MCF 10A (cell line): ENCODE measurements at regions of chr13 and their contacts with region 1.

Region 1: GRCh38 chr13:27826379-27827353 is 34.4 kb downstream of the GSX1 start:
- DNase-seq: peak; percentile 87
- H3K4me3 Mint-ChIP-seq: peak overlapping the region; percentile 66
- H3K27ac Mint-ChIP-seq: peak overlapping the region; percentile 66
- H3K4me1 Mint-ChIP-seq: peaks cover 21% of the 10 kb centered on the region
- H3K27me3 Mint-ChIP-seq: peaks cover 29% of the 10 kb centered on the region
- CTCF ChIP-seq: peak; percentile 95

Region 2: GRCh38 chr13:27362064-27362883 is 464.4 kb before region 1 on chr13:
- CTCF ChIA-PET with region 1: interaction called, 100 read pairs
- POLR2A ChIA-PET with region 1: interaction called, 5 read pairs
- intact Hi-C with region 1: loop called (anchors 1 kb)
- DNase-seq: peak; percentile 79
- H3K4me3 Mint-ChIP-seq: peak overlapping the region; percentile 49
- H3K27ac Mint-ChIP-seq: peak overlapping the region; percentile 49
- H3K4me1 Mint-ChIP-seq: no peaks in the 10 kb centered on the region
- H3K27me3 Mint-ChIP-seq: peaks cover 6% of the 10 kb centered on the region
- CTCF ChIP-seq: peak; percentile 92

Region 3: DNA sequence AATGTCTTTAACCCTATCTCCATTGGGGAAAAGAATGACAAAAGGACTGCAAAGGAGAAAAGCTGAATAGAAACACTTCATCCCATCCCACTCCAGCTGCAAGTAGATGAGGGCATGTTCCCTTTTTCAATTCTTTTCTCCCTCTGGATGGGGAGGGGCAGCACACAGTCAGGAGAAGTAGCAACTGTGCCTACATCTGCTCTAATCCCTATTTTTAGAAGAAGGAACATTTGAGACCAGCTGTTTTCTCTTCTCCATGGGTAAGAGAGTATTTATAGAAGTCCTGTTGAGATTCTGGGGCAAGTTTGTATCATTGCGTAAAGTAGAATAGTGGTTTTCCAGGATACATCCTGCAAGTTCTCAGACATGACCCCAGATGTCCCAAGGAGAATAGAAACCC is 411.6 kb before region 1 on chr13:
- CTCF ChIA-PET with region 1: interaction called, 17 read pairs
- POLR2A ChIA-PET with region 1: no interaction called
- intact Hi-C with region 1: no loop called
- DNase-seq: no peak
- H3K4me3 Mint-ChIP-seq: no peak overlapping the region
- H3K27ac Mint-ChIP-seq: no peak overlapping the region
- H3K4me1 Mint-ChIP-seq: no peaks in the 10 kb centered on the region
- H3K27me3 Mint-ChIP-seq: peaks cover 61% of the 10 kb centered on the region
- CTCF ChIP-seq: no peak

Region 4: DNA sequence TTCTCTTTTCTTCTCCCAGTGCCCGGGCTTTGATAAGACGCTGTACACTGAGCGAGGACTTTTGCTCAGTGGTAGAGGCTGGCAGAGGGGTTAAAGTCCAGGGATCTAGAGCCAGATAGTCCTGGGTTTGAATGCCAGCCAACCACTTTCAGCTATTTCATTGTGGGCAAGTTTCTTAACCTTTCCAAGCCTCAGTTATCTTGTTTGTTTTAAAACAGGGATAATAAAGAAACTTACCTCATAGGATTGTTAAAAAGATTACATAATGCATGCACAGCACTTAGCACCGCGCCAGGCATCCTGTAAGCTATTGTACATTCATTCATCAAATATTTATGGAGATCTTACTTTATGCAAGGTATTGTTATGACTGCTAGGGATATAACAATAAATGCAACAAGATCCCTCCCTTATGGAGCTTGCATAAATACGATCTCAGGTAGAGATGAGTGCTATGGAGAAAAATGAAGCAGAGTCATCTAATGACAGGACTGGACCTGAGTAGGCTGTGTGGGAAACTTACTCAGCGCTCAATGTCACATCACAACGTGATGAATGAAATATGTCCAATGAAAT is 277.2 kb before region 1 on chr13:
- CTCF ChIA-PET with region 1: interaction called, 31 read pairs
- POLR2A ChIA-PET with region 1: interaction called, 4 read pairs
- intact Hi-C with region 1: no loop called
- DNase-seq: peak; percentile 73
- H3K4me3 Mint-ChIP-seq: no peak overlapping the region
- H3K27ac Mint-ChIP-seq: no peak overlapping the region
- H3K4me1 Mint-ChIP-seq: peaks cover 8% of the 10 kb centered on the region
- H3K27me3 Mint-ChIP-seq: no peaks in the 10 kb centered on the region
- CTCF ChIP-seq: no peak

Region 5: GRCh38 chr13:27770809-27771208 is 55.9 kb before region 1 on chr13:
- CTCF ChIA-PET with region 1: interaction called, 118 read pairs
- POLR2A ChIA-PET with region 1: interaction called, 4 read pairs
- intact Hi-C with region 1: loop called (anchors 1 kb)
- DNase-seq: peak; percentile 66
- H3K4me3 Mint-ChIP-seq: no peak overlapping the region
- H3K27ac Mint-ChIP-seq: no peak overlapping the region
- H3K4me1 Mint-ChIP-seq: peaks cover 6% of the 10 kb centered on the region
- H3K27me3 Mint-ChIP-seq: no peaks in the 10 kb centered on the region
- CTCF ChIP-seq: peak; percentile 45

Region 6: GRCh38 chr13:27868641-27869435 is 42.2 kb after region 1 on chr13:
- CTCF ChIA-PET with region 1: interaction called, 18 read pairs
- POLR2A ChIA-PET with region 1: no interaction called
- intact Hi-C with region 1: no loop called
- DNase-seq: peak; percentile 26
- H3K4me3 Mint-ChIP-seq: no peak overlapping the region
- H3K27ac Mint-ChIP-seq: no peak overlapping the region
- H3K4me1 Mint-ChIP-seq: peaks cover 6% of the 10 kb centered on the region
- H3K27me3 Mint-ChIP-seq: no peaks in the 10 kb centered on the region
- CTCF ChIP-seq: peak; percentile 60

Region 7: DNA sequence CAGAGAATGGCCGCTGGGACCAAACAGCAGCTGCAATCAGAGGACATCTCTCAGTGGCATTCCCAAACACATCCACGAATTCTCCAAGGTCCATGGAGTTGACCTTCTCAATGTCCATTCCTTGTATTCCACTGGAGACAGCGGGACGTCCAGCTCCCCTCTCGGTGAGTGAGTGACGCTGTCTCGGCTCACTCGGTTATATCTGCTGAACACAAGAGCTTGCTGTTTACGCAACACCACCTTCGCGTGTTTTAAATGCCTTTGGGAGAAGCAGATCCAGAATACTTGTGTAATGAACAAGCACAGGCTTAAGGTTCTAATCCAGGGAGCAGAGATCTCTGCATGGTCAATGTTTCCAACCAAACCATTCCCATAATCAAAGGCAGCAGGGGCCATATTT is 161.9 kb after region 1 on chr13 and contains the start of gene URAD:
- CTCF ChIA-PET with region 1: interaction called, 173 read pairs
- POLR2A ChIA-PET with region 1: interaction called, 7 read pairs
- intact Hi-C with region 1: loop called (anchors 1 kb)
- DNase-seq: no peak
- H3K4me3 Mint-ChIP-seq: no peak within 1 kb of the TSS
- H3K27ac Mint-ChIP-seq: no peak within 1 kb of the TSS
- H3K4me1 Mint-ChIP-seq: no peaks in the 10 kb centered on the region
- H3K27me3 Mint-ChIP-seq: peaks cover 14% of the 10 kb centered on the region
- CTCF ChIP-seq: no peak
- total RNA-seq, gene URAD: not detected in 2 replicates

Region 8: GRCh38 chr13:28047757-28048388 is 221.2 kb after region 1 on chr13:
- CTCF ChIA-PET with region 1: no interaction called
- POLR2A ChIA-PET with region 1: no interaction called
- intact Hi-C with region 1: no loop called
- DNase-seq: no peak
- H3K4me3 Mint-ChIP-seq: no peak overlapping the region
- H3K27ac Mint-ChIP-seq: no peak overlapping the region
- H3K4me1 Mint-ChIP-seq: peaks cover 6% of the 10 kb centered on the region
- H3K27me3 Mint-ChIP-seq: no peaks in the 10 kb centered on the region
- CTCF ChIP-seq: no peak